ENCODE measurements at regions of chr3 and their contacts with region 1.

Region 1: DNA sequence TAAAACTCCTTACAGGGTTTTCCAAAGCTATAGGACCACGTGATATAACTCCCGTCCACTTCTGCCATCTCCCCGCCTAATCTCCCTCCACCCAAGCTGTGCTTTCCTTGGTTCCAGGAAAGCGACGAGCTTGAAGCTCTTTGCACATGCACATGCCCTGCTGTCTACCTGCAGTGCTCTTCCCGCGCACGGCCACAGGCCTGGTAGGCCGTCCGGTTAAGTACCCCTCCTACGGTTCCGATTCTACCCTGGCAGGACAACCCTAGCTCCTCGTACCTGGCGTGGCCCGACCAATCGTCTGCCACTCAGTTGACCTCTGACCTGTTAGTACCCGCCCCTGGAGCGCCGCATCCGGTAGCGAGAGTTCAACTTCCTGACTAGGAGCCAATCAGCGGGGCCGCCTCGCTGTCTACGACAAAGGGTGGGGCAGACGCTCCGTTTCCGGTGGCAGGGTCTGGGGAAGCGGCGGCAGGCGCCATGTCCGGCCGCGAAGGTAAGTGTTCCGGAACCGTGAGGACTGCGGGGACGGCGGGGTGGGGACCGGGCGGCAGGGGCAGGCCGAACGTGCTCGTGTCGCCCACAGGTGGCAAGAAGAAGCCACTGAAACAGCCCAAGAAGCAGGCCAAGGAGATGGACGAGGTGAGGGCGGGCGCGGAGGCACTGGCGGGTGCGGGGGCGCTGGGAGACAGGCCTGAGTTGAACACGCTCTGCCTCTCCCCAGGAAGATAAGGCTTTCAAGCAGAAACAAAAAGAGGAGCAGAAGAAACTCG is at the starts of genes CCDC51 and TMA7:
- DNase-seq: peak; percentile 99
- H3K4me3 Mint-ChIP-seq: peak within 1 kb of the TSS; percentile 85
- H3K27ac Mint-ChIP-seq: peak within 1 kb of the TSS; percentile 91
- H3K4me1 Mint-ChIP-seq: peaks cover 52% of the 10 kb centered on the region
- H3K27me3 Mint-ChIP-seq: no peaks in the 10 kb centered on the region

Region 2: DNA sequence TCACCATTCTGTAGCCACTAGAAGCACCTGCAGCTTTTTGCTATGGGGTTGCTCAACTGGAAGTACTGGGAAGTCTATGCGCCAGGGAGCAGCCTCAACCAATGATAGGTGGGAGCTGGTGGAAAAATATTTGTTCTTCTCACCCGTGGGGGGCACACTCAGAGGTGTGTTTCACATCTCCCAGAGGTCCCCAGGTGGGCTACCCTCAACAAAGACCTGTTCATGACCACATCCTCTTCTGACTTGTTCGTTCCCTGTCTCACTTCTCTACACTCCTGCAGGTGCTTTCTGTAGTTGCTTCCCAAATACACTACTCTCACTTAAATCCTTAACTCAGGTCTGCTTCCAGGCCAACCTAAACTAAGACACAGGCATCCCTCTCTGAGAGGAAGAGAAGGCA is 213.1 kb before region 1 on chr3:
- CTCF ChIA-PET with region 1: interaction called, 17 read pairs
- DNase-seq: no peak
- H3K4me3 Mint-ChIP-seq: no peak overlapping the region
- H3K27ac Mint-ChIP-seq: no peak overlapping the region
- H3K4me1 Mint-ChIP-seq: peaks cover 5% of the 10 kb centered on the region
- H3K27me3 Mint-ChIP-seq: peaks cover 45% of the 10 kb centered on the region

Region 3: DNA sequence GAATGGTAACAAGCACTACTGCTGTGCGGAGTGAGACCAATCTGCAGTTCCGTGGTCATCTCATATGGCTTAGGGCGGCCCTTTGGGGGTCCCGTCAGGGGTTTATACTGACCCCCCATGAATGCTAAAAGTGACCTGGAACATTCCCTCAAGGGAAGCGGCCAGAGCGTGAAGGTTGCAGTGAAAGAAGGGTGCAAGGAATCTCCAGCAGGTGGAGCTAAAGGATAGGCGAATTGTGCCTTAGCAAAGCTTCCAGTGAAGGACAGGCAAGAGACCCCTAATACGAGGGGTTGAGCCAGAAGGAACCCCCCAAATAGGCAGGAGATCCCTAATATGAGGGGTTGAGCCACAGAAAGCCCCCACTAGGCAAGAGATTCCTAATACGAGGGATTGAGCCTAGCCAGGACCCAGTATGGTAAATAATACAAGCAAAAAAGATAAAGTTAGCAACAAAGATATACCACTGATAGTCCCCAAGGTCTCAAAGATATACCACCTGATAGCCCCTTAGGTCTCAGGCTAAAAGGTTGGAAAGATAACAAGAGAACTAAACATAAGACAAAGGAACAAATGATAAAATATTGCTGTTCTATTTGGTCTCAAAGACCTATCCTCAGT is 166.3 kb before region 1 on chr3:
- CTCF ChIA-PET with region 1: interaction called, 110 read pairs
- DNase-seq: peak; percentile 70
- H3K4me3 Mint-ChIP-seq: no peak overlapping the region
- H3K27ac Mint-ChIP-seq: no peak overlapping the region
- H3K4me1 Mint-ChIP-seq: peaks cover 19% of the 10 kb centered on the region
- H3K27me3 Mint-ChIP-seq: no peaks in the 10 kb centered on the region

Region 4: DNA sequence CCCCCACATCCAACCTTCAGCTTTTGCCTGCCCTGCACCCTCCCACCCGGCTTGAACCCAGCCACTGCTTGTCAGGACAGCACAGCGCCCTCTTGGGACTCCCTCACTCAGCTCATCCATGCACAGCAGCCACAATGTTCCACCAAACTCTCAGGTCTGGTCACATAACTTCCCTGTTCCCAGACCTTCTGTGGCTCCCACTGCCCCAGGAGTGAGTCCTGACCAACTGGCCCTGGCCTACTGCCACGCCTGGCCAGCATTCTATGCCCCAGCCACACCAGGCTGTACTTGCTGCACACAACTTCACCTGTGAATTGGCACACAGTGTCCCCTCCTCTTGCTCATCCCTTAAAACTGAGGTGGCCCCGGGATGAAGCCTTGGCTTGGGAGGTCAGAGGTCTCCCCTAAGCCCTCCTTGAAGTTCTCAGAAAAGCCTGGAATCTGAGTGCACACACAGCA is 31.2 kb before region 1 on chr3:
- CTCF ChIA-PET with region 1: interaction called, 170 read pairs
- DNase-seq: peak; percentile 20
- H3K4me3 Mint-ChIP-seq: no peak overlapping the region
- H3K27ac Mint-ChIP-seq: no peak overlapping the region
- H3K4me1 Mint-ChIP-seq: no peaks in the 10 kb centered on the region
- H3K27me3 Mint-ChIP-seq: peaks cover 9% of the 10 kb centered on the region

Region 5: DNA sequence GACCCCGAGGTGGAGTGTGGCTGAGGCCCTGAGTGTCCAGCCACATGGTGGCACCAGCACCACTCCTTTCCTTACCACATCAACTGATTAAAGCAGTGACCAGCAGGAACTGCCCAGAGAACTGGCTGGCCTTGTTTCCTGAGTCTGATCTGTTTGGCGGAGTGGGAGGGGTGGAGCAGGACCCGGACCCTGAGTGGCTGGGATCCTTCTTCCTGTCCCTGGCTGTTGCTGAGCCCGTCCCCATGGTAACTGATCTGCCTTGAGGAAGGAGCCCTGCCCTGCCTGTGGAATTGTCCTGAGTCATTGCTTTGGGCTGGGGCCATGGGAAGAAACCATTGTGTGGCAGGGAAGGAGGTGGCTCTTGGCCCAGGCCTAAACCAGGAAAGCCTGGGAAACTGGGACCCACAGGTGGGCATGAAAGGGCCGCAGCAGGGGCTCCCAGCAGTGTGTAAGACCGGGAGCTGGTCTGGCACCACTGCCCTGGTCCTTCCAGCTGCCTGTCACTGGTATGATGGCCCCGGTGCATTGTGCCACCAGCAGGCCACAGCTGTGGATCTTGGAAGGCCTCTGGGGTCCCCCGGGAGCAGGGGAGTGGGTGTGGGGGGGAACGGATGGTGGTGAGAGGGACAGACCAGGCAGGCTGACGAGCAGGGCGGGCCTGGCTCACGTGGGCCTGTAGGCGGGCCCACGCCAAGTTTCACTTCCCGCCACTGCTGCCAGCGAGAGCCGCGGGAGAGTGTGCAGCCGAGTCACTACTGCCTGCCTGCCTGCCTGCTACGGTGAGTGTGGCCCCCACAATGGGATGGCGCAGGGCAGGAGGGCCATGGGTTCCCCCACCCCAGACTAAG is 25.8 kb after region 1 on chr3:
- CTCF ChIA-PET with region 1: interaction called, 13 read pairs
- DNase-seq: peak; percentile 88
- H3K4me3 Mint-ChIP-seq: peak overlapping the region; percentile 93
- H3K27ac Mint-ChIP-seq: peak overlapping the region; percentile 91
- H3K4me1 Mint-ChIP-seq: peaks cover 58% of the 10 kb centered on the region
- H3K27me3 Mint-ChIP-seq: no peaks in the 10 kb centered on the region

Region 6: GRCh38 chr3:48548729-48549705 is 109.0 kb after region 1 on chr3:
- CTCF ChIA-PET with region 1: interaction called, 91 read pairs
- DNase-seq: peak; percentile 91
- H3K4me3 Mint-ChIP-seq: no peak overlapping the region
- H3K27ac Mint-ChIP-seq: no peak overlapping the region
- H3K4me1 Mint-ChIP-seq: peaks cover 29% of the 10 kb centered on the region
- H3K27me3 Mint-ChIP-seq: no peaks in the 10 kb centered on the region